OCI-LY7 (cell line): ENCODE measurements at regions of chr13 and their contacts with region 1.

Region 1: DNA sequence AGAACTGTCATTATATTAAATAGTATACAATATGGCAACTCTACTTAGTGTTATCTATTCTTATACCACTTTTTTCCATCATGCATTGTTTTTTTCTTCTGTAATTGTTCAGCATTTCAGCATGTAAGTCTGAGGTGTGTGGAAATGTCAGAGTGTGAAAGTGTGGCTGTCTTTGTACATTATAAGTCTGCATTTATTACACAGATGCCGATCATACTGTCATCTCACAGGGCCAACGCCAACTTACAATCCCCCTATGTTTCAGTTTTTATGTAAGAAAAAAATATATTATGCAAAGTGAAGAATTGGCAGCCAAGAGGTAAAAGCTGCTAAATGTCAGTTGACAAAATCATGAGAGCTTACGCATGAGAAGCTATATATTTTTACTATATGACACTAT is 42.9 kb upstream of the PCDH17 start:
- DNase-seq: no peak
- H3K4me3 ChIP-seq: no peak overlapping the region
- H3K27ac ChIP-seq: no peak overlapping the region
- H3K4me1 ChIP-seq: no peaks in the 10 kb centered on the region
- CTCF ChIP-seq: no peak

Region 2: GRCh38 chr13:56216221-56216620 is 1372.4 kb before region 1 on chr13:
- CTCF ChIA-PET with region 1: no interaction called
- POLR2A ChIA-PET with region 1: no interaction called
- intact Hi-C with region 1: no loop called
- DNase-seq: no peak
- H3K4me3 ChIP-seq: no peak overlapping the region
- H3K27ac ChIP-seq: no peak overlapping the region
- H3K4me1 ChIP-seq: no peaks in the 10 kb centered on the region
- CTCF ChIP-seq: no peak

Region 3: GRCh38 chr13:56755181-56755940 is 833.3 kb before region 1 on chr13:
- CTCF ChIA-PET with region 1: no interaction called
- POLR2A ChIA-PET with region 1: no interaction called
- intact Hi-C with region 1: no loop called
- DNase-seq: no peak
- H3K4me3 ChIP-seq: no peak overlapping the region
- H3K27ac ChIP-seq: no peak overlapping the region
- H3K4me1 ChIP-seq: no peaks in the 10 kb centered on the region
- CTCF ChIP-seq: no peak

Region 4: DNA sequence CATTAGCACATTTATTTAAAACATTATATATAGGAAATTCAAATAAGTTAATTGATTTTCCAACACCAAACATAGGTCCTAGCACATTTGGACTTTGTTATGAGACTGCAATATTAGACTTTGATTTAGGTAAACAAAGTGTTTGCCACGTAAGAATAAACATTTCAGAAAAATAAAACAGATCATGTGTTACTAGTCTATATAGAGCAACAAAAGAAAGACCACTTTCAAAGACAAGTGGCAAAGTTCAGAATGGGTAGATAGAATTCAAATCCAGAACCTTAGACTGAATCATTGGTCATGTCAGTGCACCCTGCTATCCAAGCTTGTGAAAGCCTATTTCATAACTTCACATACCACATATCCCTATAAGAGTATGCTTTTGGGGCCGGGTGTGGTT is 514.7 kb before region 1 on chr13:
- CTCF ChIA-PET with region 1: no interaction called
- POLR2A ChIA-PET with region 1: no interaction called
- intact Hi-C with region 1: no loop called
- DNase-seq: no peak
- H3K4me3 ChIP-seq: no peak overlapping the region
- H3K27ac ChIP-seq: no peak overlapping the region
- H3K4me1 ChIP-seq: no peaks in the 10 kb centered on the region
- CTCF ChIP-seq: no peak

Region 5: GRCh38 chr13:57653229-57653989 is 64.8 kb after region 1 on chr13:
- CTCF ChIA-PET with region 1: no interaction called
- POLR2A ChIA-PET with region 1: interaction called, 12 read pairs
- intact Hi-C with region 1: no loop called
- DNase-seq: no peak
- H3K4me3 ChIP-seq: no peak overlapping the region
- H3K27ac ChIP-seq: no peak overlapping the region
- H3K4me1 ChIP-seq: no peaks in the 10 kb centered on the region
- CTCF ChIP-seq: no peak